ENCODE measurements at regions of chr5 and their contacts with region 1.

Region 1: DNA sequence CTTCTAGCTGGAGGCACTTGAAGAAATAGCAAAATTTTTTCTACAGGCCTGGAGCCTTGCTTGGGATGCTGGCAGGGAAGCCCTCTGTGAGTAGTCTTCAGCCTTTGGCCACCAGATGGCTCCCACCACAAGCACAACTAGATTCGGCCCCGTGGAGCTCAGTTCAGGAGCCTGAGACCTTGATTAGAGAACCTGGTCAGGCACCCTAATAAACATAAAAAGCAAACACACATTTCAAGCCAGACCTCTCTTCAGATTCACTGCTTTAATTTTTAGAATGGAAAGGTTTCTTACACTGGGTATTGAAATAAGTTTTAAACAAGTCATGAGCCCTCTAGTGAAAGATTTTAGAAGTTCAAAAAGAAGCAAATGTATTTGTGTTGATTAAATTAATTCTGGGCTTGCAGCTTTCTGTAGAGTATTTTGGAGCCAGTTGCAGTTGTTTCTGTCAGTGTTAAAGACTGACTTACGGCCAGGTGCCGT is 41.4 kb downstream of the GLRX start:
- DNase-seq: peak; percentile 81
- H3K4me3 Mint-ChIP-seq: peak overlapping the region; percentile 47
- H3K27ac Mint-ChIP-seq: peak overlapping the region; percentile 0
- H3K4me1 Mint-ChIP-seq: peaks cover 26% of the 10 kb centered on the region
- H3K27me3 Mint-ChIP-seq: no peaks in the 10 kb centered on the region

Region 2: DNA sequence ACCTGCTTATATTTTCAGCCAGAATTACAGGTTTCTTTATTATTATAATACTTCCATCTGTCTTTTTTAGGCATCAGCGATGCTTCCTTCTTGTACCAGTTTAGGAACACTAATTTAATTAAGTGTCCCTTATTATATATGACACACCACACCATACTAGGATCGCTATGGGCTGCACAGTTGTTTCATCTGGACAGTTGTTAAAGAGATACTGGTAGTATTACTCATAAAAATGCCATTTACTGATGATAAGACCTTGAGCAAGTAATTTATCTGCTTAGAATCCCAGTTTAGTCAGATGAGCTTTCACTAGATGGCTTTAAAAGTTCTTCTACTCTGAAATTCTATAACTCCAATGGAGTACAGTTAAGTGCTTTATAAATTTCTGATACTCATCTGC is 209.1 kb before region 1 on chr5:
- CTCF ChIA-PET with region 1: no interaction called
- DNase-seq: no peak
- H3K4me3 Mint-ChIP-seq: no peak overlapping the region
- H3K27ac Mint-ChIP-seq: no peak overlapping the region
- H3K4me1 Mint-ChIP-seq: no peaks in the 10 kb centered on the region
- H3K27me3 Mint-ChIP-seq: no peaks in the 10 kb centered on the region

Region 3: GRCh38 chr5:95669540-95669939 is 111.6 kb before region 1 on chr5:
- CTCF ChIA-PET with region 1: interaction called, 44 read pairs
- DNase-seq: no peak
- H3K4me3 Mint-ChIP-seq: no peak overlapping the region
- H3K27ac Mint-ChIP-seq: no peak overlapping the region
- H3K4me1 Mint-ChIP-seq: peaks cover 3% of the 10 kb centered on the region
- H3K27me3 Mint-ChIP-seq: peaks cover 12% of the 10 kb centered on the region

Region 4: DNA sequence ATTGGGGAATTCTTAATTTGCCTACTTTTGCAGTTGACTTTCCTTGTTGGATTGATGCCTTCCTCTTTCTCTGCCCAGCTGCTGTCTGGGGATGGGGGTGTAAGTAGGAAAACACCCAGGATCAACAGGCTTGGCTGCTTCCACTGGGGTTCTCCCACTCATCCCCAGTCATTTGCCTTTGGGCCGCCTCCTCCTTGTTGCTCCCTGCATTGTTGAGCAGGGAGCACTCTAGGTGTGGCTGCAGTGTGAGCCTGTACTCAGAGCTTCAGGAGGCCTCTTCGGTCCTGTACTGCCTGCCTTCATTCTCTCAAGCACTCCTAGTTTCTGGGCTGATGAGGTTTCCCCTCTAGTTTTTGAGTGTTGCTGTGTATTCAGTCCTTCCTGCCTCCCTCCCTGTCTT is 37.9 kb before region 1 on chr5:
- CTCF ChIA-PET with region 1: no interaction called
- DNase-seq: no peak
- H3K4me3 Mint-ChIP-seq: no peak overlapping the region
- H3K27ac Mint-ChIP-seq: no peak overlapping the region
- H3K4me1 Mint-ChIP-seq: peaks cover 5% of the 10 kb centered on the region
- H3K27me3 Mint-ChIP-seq: peaks cover 15% of the 10 kb centered on the region

Region 5: GRCh38 chr5:95794070-95794516 is 13.0 kb after region 1 on chr5:
- CTCF ChIA-PET with region 1: interaction called, 38 read pairs
- DNase-seq: no peak
- H3K4me3 Mint-ChIP-seq: no peak overlapping the region
- H3K27ac Mint-ChIP-seq: no peak overlapping the region
- H3K4me1 Mint-ChIP-seq: peaks cover 5% of the 10 kb centered on the region
- H3K27me3 Mint-ChIP-seq: no peaks in the 10 kb centered on the region

Region 6: GRCh38 chr5:95817440-95817839 is 36.3 kb after region 1 on chr5:
- CTCF ChIA-PET with region 1: interaction called, 29 read pairs
- DNase-seq: no peak
- H3K4me3 Mint-ChIP-seq: peak overlapping the region; percentile 70
- H3K27ac Mint-ChIP-seq: peak overlapping the region; percentile 76
- H3K4me1 Mint-ChIP-seq: peaks cover 81% of the 10 kb centered on the region
- H3K27me3 Mint-ChIP-seq: no peaks in the 10 kb centered on the region

Region 7: GRCh38 chr5:95846554-95847260 is 65.6 kb after region 1 on chr5:
- CTCF ChIA-PET with region 1: interaction called, 377 read pairs
- DNase-seq: peak; percentile 76
- H3K4me3 Mint-ChIP-seq: no peak overlapping the region
- H3K27ac Mint-ChIP-seq: no peak overlapping the region
- H3K4me1 Mint-ChIP-seq: peaks cover 21% of the 10 kb centered on the region
- H3K27me3 Mint-ChIP-seq: peaks cover 15% of the 10 kb centered on the region

Measured in activated naive CD4-positive, alpha-beta T cell treated with anti-CD3 and anti-CD28 coated beads, Interleukin-2, amount 10 ng/mL, durations not matched to agents 7 days and 5 days (primary cell).